ENCODE measurements at regions of chr15 and their contacts with region 1.

Region 1: DNA sequence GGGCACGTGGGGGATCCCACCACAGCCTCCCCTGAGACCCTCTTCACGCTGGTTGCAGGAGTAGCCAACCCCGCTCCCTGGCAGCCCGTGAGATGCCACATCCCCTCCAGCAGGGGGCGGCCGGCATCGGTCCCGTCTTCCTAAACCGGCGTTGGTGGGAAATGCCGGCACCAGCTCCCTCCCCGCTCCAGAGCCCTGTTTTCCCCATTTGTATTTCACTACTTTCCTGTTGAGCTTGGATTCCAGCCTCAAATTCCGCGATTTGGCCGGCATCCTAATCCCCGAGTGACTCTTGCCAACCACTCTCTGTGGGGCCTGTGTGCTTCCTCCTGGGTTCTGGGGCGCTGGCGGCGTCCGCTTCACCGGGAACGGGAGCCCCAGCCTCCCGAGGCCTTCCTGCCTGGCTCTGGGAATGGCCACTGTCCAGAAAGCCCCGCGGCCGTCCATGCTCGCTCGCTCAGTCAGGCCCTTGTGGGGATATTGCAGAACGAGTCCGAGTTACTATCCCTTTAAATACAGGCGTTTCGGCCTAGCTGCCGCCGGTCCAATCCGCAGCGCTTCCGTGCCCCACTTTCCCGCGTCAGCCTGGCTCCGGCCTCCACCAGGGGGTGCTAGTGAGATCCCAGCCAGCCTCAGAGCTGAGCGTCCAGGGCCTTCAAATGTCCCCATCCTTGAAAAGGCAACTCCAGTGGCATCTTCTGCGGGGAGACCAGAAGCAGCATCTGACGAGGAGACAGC is 8.1 kb upstream of the ADAMTS17 start:
- DNase-seq: peak; percentile 98
- H3K4me3 ChIP-seq: peak overlapping the region; percentile 65 to 89 (median 78)
- H3K27ac ChIP-seq: peak overlapping the region; percentile 95 to 100 (median 97)
- H3K4me1 ChIP-seq: peaks cover 0 to 12% (median 11%) of the 10 kb centered on the region in 4 donors
- H3K27me3 ChIP-seq: peaks cover 0 to 8% (median 0%) of the 10 kb centered on the region in 3 donors
- CTCF ChIP-seq: peak; percentile 78 to 89 (median 86)
- EP300 ChIP-seq: no peak
- POLR2A ChIP-seq: no peak

Region 2: DNA sequence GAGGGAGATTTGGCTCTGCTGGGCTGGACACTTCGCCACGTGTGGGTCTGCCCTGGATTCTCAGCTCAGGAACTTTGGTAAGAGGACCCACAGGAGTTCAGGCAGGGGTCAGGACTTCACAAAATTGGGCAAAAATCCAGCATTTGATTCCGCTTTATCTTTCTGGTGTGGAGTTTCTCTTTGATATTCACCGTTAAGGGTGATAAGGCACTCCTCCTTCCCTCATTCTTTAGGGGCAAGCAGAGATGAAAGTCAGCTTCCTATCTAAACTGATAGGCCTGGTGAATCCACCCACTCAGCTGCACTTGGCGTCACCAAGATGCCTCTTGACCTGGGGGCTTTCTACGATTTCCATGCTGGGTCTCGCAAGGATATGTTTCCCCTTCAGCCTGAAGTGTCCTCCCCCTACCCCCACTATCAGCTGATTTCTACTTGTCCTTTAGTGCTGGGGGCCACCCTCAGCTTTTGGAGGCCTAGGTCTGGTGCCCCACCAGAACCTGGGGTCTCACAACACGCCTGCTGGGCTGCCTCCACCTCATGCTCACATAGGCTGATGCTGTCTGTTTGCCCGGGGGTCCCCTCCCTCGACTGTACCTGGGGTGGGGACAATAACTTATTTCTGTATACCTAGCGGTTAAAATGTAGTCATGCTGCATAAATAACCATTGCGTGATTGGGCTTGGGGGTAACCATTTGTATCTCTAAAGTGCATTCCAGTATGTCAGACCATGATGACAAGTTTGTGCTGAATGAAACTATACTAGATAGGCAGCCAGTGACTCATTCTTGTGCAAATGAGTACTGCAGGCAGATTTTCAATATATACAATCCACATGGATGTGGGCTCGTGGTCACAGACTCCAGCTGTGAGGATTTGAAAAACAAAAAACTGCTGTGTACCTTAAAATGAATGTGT is 256.4 kb before region 1 on chr15:
- intact Hi-C with region 1: no loop called
- DNase-seq: peak; percentile 39
- H3K4me3 ChIP-seq: no peak overlapping the region
- H3K27ac ChIP-seq: no peak overlapping the region
- H3K4me1 ChIP-seq: no peaks in the 10 kb centered on the region
- H3K27me3 ChIP-seq: no peaks in the 10 kb centered on the region
- CTCF ChIP-seq: no peak
- EP300 ChIP-seq: no peak
- POLR2A ChIP-seq: no peak

Region 3: DNA sequence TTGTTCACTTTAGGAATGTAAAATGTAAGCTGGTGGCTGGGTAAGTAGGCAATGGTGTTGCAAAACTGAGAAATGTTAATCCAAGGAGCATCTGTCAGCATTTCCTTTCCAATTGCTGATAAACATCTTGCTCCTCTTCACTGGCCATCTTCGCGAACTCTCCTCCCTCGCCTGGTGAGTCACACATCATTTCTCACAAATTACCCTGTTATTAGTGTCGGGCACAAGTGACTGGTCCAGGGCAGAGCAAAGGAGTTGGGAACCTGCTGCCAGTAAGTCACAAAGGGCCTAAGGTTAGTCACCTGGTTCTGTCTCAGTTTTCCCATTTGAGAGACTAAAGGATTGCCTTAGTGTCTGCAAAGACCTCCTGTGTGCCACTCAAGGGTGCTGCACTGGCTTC is 165.9 kb after region 1 on chr15:
- intact Hi-C with region 1: loop called (anchors 5 kb)
- DNase-seq: no peak
- H3K4me3 ChIP-seq: no peak overlapping the region
- H3K27ac ChIP-seq: no peak overlapping the region
- H3K4me1 ChIP-seq: peaks cover 0 to 12% (median 8%) of the 10 kb centered on the region in 4 donors
- H3K27me3 ChIP-seq: no peaks in the 10 kb centered on the region
- CTCF ChIP-seq: no peak
- EP300 ChIP-seq: no peak
- POLR2A ChIP-seq: no peak

Region 4: DNA sequence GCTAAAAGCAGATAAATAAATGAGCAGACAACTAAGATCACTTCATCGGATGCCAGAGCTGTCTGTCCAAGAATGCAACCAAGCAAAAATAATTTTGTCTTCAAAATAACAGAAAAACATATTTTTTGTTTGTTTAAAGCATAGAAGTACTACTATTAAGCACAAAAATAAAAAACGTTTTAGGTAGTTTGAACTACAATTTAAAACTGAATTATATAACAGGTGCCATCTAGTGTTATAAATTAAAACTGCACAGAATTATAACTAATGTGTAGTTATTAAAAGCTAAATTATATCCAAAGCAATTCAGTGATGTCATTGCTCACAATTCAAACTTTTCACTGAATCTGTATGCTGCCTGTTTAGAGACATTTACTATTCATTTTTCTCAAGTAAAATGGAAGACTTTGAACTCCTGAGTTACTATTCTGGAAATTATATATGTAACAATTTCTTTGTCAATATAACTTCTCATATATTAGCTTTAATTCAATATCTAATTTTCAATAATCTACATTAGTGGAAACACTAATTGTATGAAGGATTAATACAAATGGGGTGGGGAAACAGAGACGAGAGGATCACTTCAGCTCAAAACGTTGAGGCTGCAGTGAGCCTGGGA is 222.6 kb after region 1 on chr15:
- intact Hi-C with region 1: loop called (anchors 1 kb)
- DNase-seq: no peak
- H3K4me3 ChIP-seq: no peak overlapping the region
- H3K27ac ChIP-seq: no peak overlapping the region
- H3K4me1 ChIP-seq: no peaks in the 10 kb centered on the region
- H3K27me3 ChIP-seq: no peaks in the 10 kb centered on the region
- CTCF ChIP-seq: peak; percentile 30 to 58 (median 42)
- EP300 ChIP-seq: no peak
- POLR2A ChIP-seq: no peak

Region 5: DNA sequence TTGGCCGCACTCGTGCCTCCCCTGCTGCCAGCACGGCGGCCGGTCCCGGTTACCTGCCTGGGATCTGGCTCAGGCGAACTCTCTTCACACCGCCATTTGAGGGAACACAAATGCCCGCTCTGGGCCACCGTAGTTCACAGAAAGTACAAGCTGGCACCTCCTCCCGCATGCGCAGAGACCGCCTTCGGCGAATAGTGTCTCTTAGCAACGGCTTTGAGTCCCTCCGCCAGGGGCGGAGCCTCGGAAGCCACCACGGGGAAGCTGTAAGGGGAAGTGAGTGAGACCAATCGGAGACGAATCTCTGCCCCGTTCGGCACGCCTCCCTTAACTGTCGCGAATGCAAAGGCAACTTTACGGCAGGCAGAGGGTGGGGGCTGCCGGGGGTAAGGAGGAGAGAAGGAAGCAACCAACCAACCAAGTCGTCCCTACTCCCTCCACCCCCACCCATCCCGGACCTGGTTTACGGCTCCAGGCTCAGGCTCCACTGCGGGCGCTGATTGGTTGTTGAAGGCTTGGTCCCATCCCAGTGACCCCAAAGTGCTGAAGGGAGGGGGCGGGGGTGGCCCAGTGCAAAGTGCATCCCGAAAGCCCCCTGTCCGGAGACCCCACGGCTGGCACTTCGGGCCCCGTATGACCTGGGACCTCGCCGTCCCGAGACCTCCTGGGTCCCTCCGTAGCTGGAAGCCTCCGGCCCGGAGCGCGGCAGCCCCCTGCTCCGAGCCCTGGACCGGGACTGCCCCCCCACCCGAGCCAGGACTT is 252.4 kb after region 1 on chr15 and contains the starts of genes ASB7 and LINS1:
- intact Hi-C with region 1: loop called (anchors 10 kb)
- DNase-seq: peak; percentile 100
- H3K4me3 ChIP-seq: peak within 1 kb of the TSS; percentile 78 to 95 (median 89)
- H3K27ac ChIP-seq: peak within 1 kb of the TSS; percentile 86 to 92 (median 88)
- H3K4me1 ChIP-seq: peaks cover 0 to 40% (median 33%) of the 10 kb centered on the region in 4 donors
- H3K27me3 ChIP-seq: no peaks in the 10 kb centered on the region
- CTCF ChIP-seq: no peak
- EP300 ChIP-seq: peak in 1 of 4 donors; percentile 17
- POLR2A ChIP-seq: peak in 1 of 2 donors; percentile 10
- total RNA-seq, gene ASB7: 7.2 to 13.8 (median 12.0) TPM
- total RNA-seq, gene LINS1: 13.6 to 74.8 (median 40.1) TPM

Region 6: GRCh38 chr15:100663086-100663914 is 313.4 kb after region 1 on chr15:
- intact Hi-C with region 1: no loop called
- DNase-seq: no peak
- H3K4me3 ChIP-seq: no peak overlapping the region
- H3K27ac ChIP-seq: peak overlapping the region in 2 of 4 donors; percentile 49 to 59
- H3K4me1 ChIP-seq: peaks cover 0 to 46% (median 19%) of the 10 kb centered on the region in 4 donors
- H3K27me3 ChIP-seq: no peaks in the 10 kb centered on the region
- CTCF ChIP-seq: no peak
- EP300 ChIP-seq: no peak
- POLR2A ChIP-seq: no peak

Region 7: GRCh38 chr15:100873029-100873677 is 523.3 kb after region 1 on chr15:
- intact Hi-C with region 1: loop called (anchors 10 kb)
- DNase-seq: peak; percentile 85
- H3K4me3 ChIP-seq: no peak overlapping the region
- H3K27ac ChIP-seq: no peak overlapping the region
- H3K4me1 ChIP-seq: no peaks in the 10 kb centered on the region
- H3K27me3 ChIP-seq: peaks cover 0 to 1% (median 0%) of the 10 kb centered on the region in 3 donors
- CTCF ChIP-seq: peak; percentile 90 to 98 (median 92)
- EP300 ChIP-seq: no peak
- POLR2A ChIP-seq: no peak

Measured in sigmoid colon (tissue), 7 donors.